K562 (cell line): ENCODE measurements at regions of chr7 and their contacts with region 1.

Region 1: GRCh38 chr7:104983578-104984539 is 30.1 kb upstream of the KMT2E start:
- DNase-seq: peak; percentile 89 to 95 (median 92)
- ATAC-seq: peak; percentile 98
- H3K4me3 ChIP-seq: peak overlapping the region; percentile 58
- H3K27ac ChIP-seq: peak overlapping the region; percentile 95
- H3K4me1 ChIP-seq: peaks cover 14 to 19% of the 10 kb centered on the region in 2 experiments; a peak in 4 of 5 replicates
- H3K27me3 ChIP-seq: no peaks in the 10 kb centered on the region
- CTCF ChIP-seq: peak; percentile 74 to 79 (median 75)
- EP300 ChIP-seq: peak; percentile 46
- POLR2A ChIP-seq: peak; percentile 98
- RAD21 ChIP-seq: peak; percentile 58 to 65

Region 2: DNA sequence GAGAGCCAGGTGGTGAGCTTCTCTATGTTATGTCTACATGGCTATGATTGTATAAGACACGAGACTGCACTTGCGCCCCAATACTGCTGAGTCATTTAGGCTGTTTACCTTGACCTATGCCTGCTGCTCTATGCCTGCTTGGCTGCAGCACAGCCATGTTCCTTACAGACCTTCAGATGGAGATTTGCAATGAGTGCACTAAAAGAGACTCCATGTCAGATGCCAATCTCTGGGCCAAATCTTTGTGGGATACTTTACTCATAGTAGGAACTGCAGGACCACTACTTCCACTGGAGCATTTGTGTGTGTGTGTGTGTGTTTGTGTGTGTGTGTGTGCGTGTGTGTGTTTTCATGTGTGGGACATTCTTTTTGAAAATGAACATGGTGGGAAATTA is 19.9 kb before region 1 on chr7:
- CTCF ChIA-PET with region 1: no interaction called
- POLR2A ChIA-PET with region 1: interaction called, 15 read pairs
- in situ Hi-C with region 1: no loop called
- intact Hi-C with region 1: loop called (anchors 2 kb)
- DNase-seq: peak in 2 of 4 experiments; percentile 46 to 76
- ATAC-seq: peak; percentile 69
- H3K4me3 ChIP-seq: no peak overlapping the region
- H3K27ac ChIP-seq: no peak overlapping the region
- H3K4me1 ChIP-seq: peaks cover 13 to 49% of the 10 kb centered on the region in 2 experiments; a peak in 4 of 5 replicates
- H3K27me3 ChIP-seq: no peaks in the 10 kb centered on the region
- CTCF ChIP-seq: no peak
- EP300 ChIP-seq: no peak
- POLR2A ChIP-seq: no peak
- RAD21 ChIP-seq: no peak

Region 3: GRCh38 chr7:105013221-105013815 is 29.5 kb after region 1 on chr7:
- CTCF ChIA-PET with region 1: interaction called, 3 read pairs
- POLR2A ChIA-PET with region 1: interaction called, 73 read pairs
- in situ Hi-C with region 1: no loop called
- intact Hi-C with region 1: loop called (anchors 1 kb)
- DNase-seq: peak; percentile 91 to 97 (median 94)
- ATAC-seq: peak; percentile 69
- H3K4me3 ChIP-seq: peak overlapping the region; percentile 78
- H3K27ac ChIP-seq: peak overlapping the region; percentile 98
- H3K4me1 ChIP-seq: peaks cover 17 to 30% of the 10 kb centered on the region in 2 experiments
- H3K27me3 ChIP-seq: no peaks in the 10 kb centered on the region
- CTCF ChIP-seq: peak; percentile 70 to 82 (median 74)
- EP300 ChIP-seq: peak; percentile 15; the same call in 1 of the 2 replicates
- POLR2A ChIP-seq: peak; percentile 100
- RAD21 ChIP-seq: no peak

Region 4: DNA sequence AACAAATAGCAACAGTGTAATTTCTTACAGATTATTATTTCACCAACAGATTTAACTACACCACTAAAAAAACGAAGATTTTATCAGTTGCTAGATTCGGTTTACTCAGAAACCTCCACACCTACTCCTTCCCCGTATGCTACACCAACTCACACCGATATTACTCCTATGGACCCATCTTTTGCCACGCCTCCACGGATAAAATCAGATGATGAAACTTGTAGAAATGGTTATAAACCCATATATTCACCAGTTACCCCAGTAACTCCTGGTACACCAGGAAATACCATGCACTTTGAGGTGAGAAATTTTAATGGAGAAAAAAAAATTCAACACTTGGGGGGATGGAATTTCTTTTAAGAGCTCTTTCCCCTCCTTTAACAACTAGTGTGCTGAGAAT is 122.6 kb after region 1 on chr7:
- CTCF ChIA-PET with region 1: no interaction called
- POLR2A ChIA-PET with region 1: interaction called, 4 read pairs
- in situ Hi-C with region 1: no loop called
- intact Hi-C with region 1: loop called (anchors 5 kb)
- DNase-seq: no peak
- ATAC-seq: peak; percentile 67
- H3K4me3 ChIP-seq: no peak overlapping the region
- H3K27ac ChIP-seq: no peak overlapping the region
- H3K4me1 ChIP-seq: no peaks in the 10 kb centered on the region
- H3K27me3 ChIP-seq: no peaks in the 10 kb centered on the region
- CTCF ChIP-seq: no peak
- EP300 ChIP-seq: peak; percentile 64; the same call in 1 of the 2 replicates
- POLR2A ChIP-seq: no peak; the same call in 1 of the 2 replicates
- RAD21 ChIP-seq: no peak

Region 5: GRCh38 chr7:105336009-105336408 is 352.1 kb after region 1 on chr7:
- CTCF ChIA-PET with region 1: interaction called, 3 read pairs
- POLR2A ChIA-PET with region 1: no interaction called
- in situ Hi-C with region 1: no loop called
- intact Hi-C with region 1: loop called (anchors 5 kb)
- DNase-seq: no peak
- ATAC-seq: no peak
- H3K4me3 ChIP-seq: no peak overlapping the region
- H3K27ac ChIP-seq: no peak overlapping the region
- H3K4me1 ChIP-seq: peaks cover 0 to 4% of the 10 kb centered on the region in 2 experiments; a peak in 1 of 5 replicates
- H3K27me3 ChIP-seq: no peaks in the 10 kb centered on the region
- CTCF ChIP-seq: peak in 1 of 3 experiments; percentile 59; a peak in 2 of 6 replicates
- EP300 ChIP-seq: no peak
- POLR2A ChIP-seq: no peak
- RAD21 ChIP-seq: peak; percentile 55 to 58

Region 6: GRCh38 chr7:105387621-105388372 is 403.9 kb after region 1 on chr7:
- CTCF ChIA-PET with region 1: no interaction called
- POLR2A ChIA-PET with region 1: no interaction called
- in situ Hi-C with region 1: no loop called
- intact Hi-C with region 1: no loop called
- DNase-seq: peak in 3 of 4 experiments; percentile 79 to 84 (median 81)
- ATAC-seq: peak; percentile 80
- H3K4me3 ChIP-seq: peak overlapping the region; percentile 90
- H3K27ac ChIP-seq: peak overlapping the region; percentile 77
- H3K4me1 ChIP-seq: peaks cover 13 to 15% of the 10 kb centered on the region in 2 experiments; a peak in 4 of 5 replicates
- H3K27me3 ChIP-seq: no peaks in the 10 kb centered on the region
- CTCF ChIP-seq: no peak
- EP300 ChIP-seq: no peak
- POLR2A ChIP-seq: no peak
- RAD21 ChIP-seq: no peak

Region 7: DNA sequence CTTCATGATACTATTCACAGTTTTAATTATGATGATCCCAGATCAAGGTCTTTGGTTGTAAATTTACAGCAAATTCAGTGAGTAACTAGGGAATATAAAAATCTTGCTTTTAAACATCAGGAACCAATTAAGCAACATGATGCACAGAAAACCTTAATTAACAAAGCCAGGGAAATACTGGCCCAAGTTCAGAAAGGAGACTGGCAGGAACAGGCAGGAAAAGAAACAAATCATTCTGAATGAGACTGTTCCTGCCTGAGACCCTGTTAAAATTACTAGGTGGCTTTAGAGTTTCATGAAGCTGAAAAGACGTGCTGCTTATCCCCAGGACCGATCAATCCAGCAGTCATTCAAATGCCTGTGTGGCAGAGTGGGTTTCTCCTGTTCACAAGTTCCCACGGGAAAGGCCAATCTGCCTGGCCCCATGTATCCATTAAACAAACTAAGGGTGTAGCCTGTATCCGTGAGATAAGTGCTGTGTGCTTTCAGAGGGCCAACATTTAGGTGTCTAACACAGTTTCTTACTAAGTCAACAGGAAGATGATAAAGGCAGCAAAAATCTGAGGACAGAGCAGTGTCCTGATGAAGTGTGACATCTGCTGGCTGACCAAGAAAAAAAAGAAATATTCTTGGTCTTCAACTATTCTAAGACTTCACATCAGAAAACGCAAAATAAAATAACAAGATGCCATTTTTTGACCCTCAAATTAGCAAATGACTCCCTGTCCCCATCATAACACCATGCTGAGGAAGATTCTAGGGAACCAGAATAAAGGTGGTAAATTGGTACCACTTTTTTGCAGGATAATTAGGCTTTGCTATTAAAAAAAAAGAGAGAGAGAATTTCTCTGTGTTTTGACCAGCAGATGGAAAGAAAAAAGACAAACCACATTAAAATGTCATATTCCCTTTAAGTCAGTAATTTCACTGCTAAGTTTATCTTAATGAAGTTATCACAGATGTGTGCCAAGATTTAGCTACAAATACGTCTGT is 504.0 kb after region 1 on chr7:
- CTCF ChIA-PET with region 1: interaction called, 14 read pairs
- POLR2A ChIA-PET with region 1: no interaction called
- in situ Hi-C with region 1: no loop called
- intact Hi-C with region 1: loop called (anchors 1 kb)
- DNase-seq: peak; percentile 33 to 83 (median 62)
- ATAC-seq: peak; percentile 96
- H3K4me3 ChIP-seq: no peak overlapping the region
- H3K27ac ChIP-seq: peak overlapping the region; percentile 27; the same call in 2 of the 3 replicates
- H3K4me1 ChIP-seq: peaks cover 0 to 10% of the 10 kb centered on the region in 2 experiments; a peak in 2 of 5 replicates
- H3K27me3 ChIP-seq: no peaks in the 10 kb centered on the region
- CTCF ChIP-seq: peak; percentile 56 to 93 (median 77); a peak in 5 of 6 replicates
- EP300 ChIP-seq: peak; percentile 79
- POLR2A ChIP-seq: no peak
- RAD21 ChIP-seq: peak; percentile 89 to 93

Region 8: GRCh38 chr7:105652359-105652993 is 668.6 kb after region 1 on chr7:
- CTCF ChIA-PET with region 1: no interaction called
- POLR2A ChIA-PET with region 1: no interaction called
- in situ Hi-C with region 1: no loop called
- intact Hi-C with region 1: no loop called
- DNase-seq: peak; percentile 84 to 88 (median 88)
- ATAC-seq: peak; percentile 97
- H3K4me3 ChIP-seq: no peak overlapping the region
- H3K27ac ChIP-seq: no peak overlapping the region
- H3K4me1 ChIP-seq: peaks cover 16 to 20% of the 10 kb centered on the region in 2 experiments; a peak in 4 of 5 replicates
- H3K27me3 ChIP-seq: no peaks in the 10 kb centered on the region; a peak in 1 of 5 replicates
- CTCF ChIP-seq: peak; percentile 95 to 98 (median 97)
- EP300 ChIP-seq: no peak
- POLR2A ChIP-seq: no peak
- RAD21 ChIP-seq: peak; percentile 88 to 95